Activated naive CD4-positive, alpha-beta T cell treated with anti-CD3 and anti-CD28 coated beads for 36 hours (primary cell): ENCODE measurements at regions of chr2 and their contacts with region 1.

Region 1: DNA sequence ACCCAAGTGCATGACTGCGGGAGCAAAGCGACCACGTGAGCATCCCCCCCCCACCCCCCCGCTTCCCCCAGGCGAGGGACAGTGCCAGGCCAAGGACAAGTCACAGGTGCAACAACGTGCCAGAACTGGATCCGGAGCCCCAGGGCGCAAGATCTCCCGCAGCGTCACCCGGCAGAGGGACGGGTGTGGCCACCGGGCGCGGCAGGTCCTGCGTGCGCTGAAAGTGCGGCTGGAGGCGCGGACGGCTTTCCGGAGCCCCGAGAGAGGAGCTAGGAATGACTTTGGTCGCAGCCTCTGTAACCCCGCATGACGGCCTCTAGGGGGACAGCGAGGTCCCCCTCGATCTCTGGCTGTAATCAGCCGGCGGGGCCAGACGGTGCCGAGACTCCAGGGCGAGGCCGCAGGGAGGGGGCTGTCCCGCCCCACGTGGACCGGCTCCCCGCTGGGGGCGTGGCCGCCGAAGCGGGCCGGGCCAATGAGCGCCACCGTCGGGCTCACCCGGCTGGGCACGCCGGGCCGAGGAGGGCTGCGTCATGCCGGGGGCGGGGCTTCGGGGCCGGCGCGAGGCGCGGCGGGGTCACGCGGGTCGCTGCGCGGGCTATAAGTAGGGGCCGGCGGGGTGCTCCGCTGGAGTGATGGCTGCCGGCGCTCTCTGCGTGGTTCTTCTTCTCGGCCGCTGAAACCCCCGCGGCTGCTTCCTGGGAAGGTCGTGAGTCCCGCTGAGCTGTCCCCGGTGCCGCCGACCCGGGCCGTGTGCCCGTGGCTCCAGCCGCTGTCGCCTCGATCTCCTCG is at the start of gene SLC20A1:
- DNase-seq: peak; percentile 96
- H3K4me3 Mint-ChIP-seq: peak within 1 kb of the TSS; percentile 99
- H3K27ac Mint-ChIP-seq: peak within 1 kb of the TSS; percentile 89
- H3K4me1 Mint-ChIP-seq: peaks cover 51% of the 10 kb centered on the region
- H3K27me3 Mint-ChIP-seq: no peaks in the 10 kb centered on the region
- total RNA-seq, gene SLC20A1: 73.1 to 73.5 TPM

Region 2: GRCh38 chr2:112150447-112150846 is 495.1 kb before region 1 on chr2:
- CTCF ChIA-PET with region 1: no interaction called
- intact Hi-C with region 1: no loop called
- DNase-seq: no peak
- H3K4me3 Mint-ChIP-seq: no peak overlapping the region
- H3K27ac Mint-ChIP-seq: no peak overlapping the region
- H3K4me1 Mint-ChIP-seq: peaks cover 26% of the 10 kb centered on the region
- H3K27me3 Mint-ChIP-seq: no peaks in the 10 kb centered on the region

Region 3: DNA sequence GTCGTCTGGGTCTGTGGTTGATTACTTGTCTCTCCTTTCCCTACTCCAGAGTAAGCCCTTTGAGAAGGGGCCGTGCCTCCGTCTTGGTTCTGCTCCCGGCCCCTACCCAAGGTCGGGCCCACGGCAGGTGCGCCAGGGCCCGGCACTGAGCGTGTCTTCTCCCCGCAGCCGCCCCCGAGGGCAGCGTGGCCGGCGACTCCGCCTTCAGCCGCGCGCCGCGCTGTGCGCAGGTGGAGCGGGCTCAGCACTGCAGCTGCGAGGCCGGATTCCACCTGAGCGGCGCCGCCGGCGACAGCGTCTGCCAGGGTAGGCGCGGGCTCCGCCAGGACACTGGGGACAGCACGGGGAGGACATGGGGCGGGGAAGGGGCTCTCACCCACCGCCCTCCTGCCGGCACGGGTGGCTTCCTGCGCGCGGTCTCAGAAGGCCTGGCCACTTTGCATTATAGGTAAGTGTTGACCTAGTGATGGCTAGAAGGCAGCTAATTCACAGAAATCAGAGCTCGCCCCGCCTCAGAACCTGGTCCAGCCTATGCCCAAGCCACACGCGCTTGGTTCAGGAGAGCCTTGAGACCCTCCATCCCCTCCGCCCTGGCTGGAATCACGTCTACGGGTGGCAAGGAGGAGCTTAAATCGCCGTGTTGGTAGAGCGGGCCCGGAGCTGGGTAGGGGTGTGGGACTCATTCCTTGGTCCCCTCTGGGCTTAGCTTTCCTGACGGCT is 463.8 kb before region 1 on chr2:
- CTCF ChIA-PET with region 1: no interaction called
- intact Hi-C with region 1: loop called (anchors 5 kb)
- DNase-seq: peak; percentile 73
- H3K4me3 Mint-ChIP-seq: peak overlapping the region; percentile 91
- H3K27ac Mint-ChIP-seq: peak overlapping the region; percentile 99
- H3K4me1 Mint-ChIP-seq: peaks cover 70% of the 10 kb centered on the region
- H3K27me3 Mint-ChIP-seq: no peaks in the 10 kb centered on the region

Region 4: GRCh38 chr2:112481050-112481527 is 164.4 kb before region 1 on chr2:
- CTCF ChIA-PET with region 1: no interaction called
- intact Hi-C with region 1: loop called (anchors 5 kb)
- DNase-seq: peak; percentile 91
- H3K4me3 Mint-ChIP-seq: peak overlapping the region; percentile 95
- H3K27ac Mint-ChIP-seq: peak overlapping the region; percentile 81
- H3K4me1 Mint-ChIP-seq: peaks cover 28% of the 10 kb centered on the region
- H3K27me3 Mint-ChIP-seq: no peaks in the 10 kb centered on the region

Region 5: GRCh38 chr2:112626604-112627059 is 18.9 kb before region 1 on chr2:
- CTCF ChIA-PET with region 1: interaction called, 152 read pairs
- intact Hi-C with region 1: loop called (anchors 1 kb)
- DNase-seq: peak; percentile 77
- H3K4me3 Mint-ChIP-seq: peak overlapping the region; percentile 47
- H3K27ac Mint-ChIP-seq: peak overlapping the region; percentile 76
- H3K4me1 Mint-ChIP-seq: peaks cover 63% of the 10 kb centered on the region
- H3K27me3 Mint-ChIP-seq: no peaks in the 10 kb centered on the region

Region 6: GRCh38 chr2:112726497-112727190 is 81.1 kb after region 1 on chr2:
- CTCF ChIA-PET with region 1: interaction called, 9 read pairs
- intact Hi-C with region 1: loop called (anchors 1 kb)
- DNase-seq: peak; percentile 93
- H3K4me3 Mint-ChIP-seq: no peak overlapping the region
- H3K27ac Mint-ChIP-seq: no peak overlapping the region
- H3K4me1 Mint-ChIP-seq: peaks cover 4% of the 10 kb centered on the region
- H3K27me3 Mint-ChIP-seq: no peaks in the 10 kb centered on the region